ENCODE measurements at regions of chr11 and their contacts with region 1.

Region 1: GRCh38 chr11:73242251-73243079 is 24.4 kb downstream of the P2RY2 start:
- DNase-seq: peak; percentile 61 to 82
- ATAC-seq: peak; percentile 28 to 68 (median 56)
- H3K4me3 ChIP-seq: peak overlapping the region in 5 of 10 donors; percentile 16 to 45 (median 29)
- H3K27ac ChIP-seq: peak overlapping the region in 5 of 10 donors; percentile 45 to 86 (median 76)
- H3K4me1 ChIP-seq: peaks cover 23 to 56% (median 54%) of the 10 kb centered on the region in 9 donors
- H3K27me3 ChIP-seq: no peaks in the 10 kb centered on the region
- CTCF ChIP-seq: peak; percentile 73 to 98 (median 89)

Region 2: GRCh38 chr11:73271936-73272719 is 29.7 kb after region 1 on chr11 and contains the start of gene P2RY6:
- intact Hi-C with region 1: no loop called
- DNase-seq: no peak
- ATAC-seq: peak; percentile 43 to 68 (median 56)
- H3K4me3 ChIP-seq: peak within 1 kb of the TSS in 7 of 10 donors; percentile 1 to 51 (median 27)
- H3K27ac ChIP-seq: peak within 1 kb of the TSS in 5 of 10 donors; percentile 1 to 77 (median 31)
- H3K4me1 ChIP-seq: peaks cover 3 to 55% (median 26%) of the 10 kb centered on the region in 9 donors
- H3K27me3 ChIP-seq: no peaks in the 10 kb centered on the region
- CTCF ChIP-seq: no peak
- total RNA-seq, gene P2RY6: 0.83 to 13.0 (median 1.8) TPM

Region 3: DNA sequence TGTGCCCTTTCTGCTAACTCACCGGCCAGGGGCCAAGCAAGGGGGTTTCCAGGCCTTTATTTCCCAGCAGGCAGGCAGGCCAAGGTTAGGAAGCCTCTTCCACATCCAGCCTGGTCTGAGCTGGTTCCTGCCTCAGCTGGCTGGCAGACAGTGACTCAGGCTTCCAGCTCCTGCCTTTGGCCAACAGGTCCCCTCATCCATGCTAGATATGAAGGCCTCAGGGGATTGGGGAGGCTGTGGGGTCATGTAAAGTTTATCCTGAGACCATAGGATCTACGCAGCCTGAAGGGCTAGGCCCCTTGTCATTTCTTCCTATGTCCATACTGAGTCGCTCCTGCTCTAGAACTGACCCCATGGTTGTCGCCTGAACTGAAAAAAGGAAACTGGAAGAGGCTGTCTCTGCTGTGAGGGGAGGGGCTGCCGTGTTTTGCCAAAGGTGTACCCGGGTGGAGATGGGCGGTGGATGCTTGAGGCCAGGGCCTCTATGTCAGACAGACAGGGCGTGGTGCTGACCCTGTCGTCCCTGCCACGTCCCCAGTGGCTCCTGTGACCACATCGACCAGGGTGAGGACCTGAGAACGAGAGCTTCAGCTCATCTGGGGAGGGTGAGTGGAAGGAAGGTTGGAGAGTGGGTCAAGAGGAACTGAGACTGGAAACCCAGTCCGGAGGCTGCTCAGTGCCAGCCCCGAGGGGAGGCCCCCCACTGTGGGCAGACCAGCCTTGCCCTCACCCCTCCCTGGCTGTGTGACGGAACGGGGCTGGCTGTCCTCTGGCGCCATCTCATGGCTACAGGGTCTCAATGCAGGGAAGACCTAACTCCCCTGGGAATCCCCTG is 46.6 kb after region 1 on chr11:
- intact Hi-C with region 1: loop called in 2 of 10 experiments (anchors 2 to 5 kb)
- DNase-seq: peak; percentile 70 to 72
- ATAC-seq: peak; percentile 79 to 89 (median 82)
- H3K4me3 ChIP-seq: peak overlapping the region in 8 of 10 donors; percentile 16 to 47 (median 37)
- H3K27ac ChIP-seq: peak overlapping the region; percentile 5 to 91 (median 60)
- H3K4me1 ChIP-seq: peaks cover 12 to 59% (median 31%) of the 10 kb centered on the region in 9 donors
- H3K27me3 ChIP-seq: no peaks in the 10 kb centered on the region
- CTCF ChIP-seq: peak; percentile 92 to 99 (median 96)